Activated naive CD4-positive, alpha-beta T cell treated with anti-CD3 and anti-CD28 coated beads for 36 hours (primary cell): ENCODE measurements at regions of chr10 and their contacts with region 1.

Region 1: DNA sequence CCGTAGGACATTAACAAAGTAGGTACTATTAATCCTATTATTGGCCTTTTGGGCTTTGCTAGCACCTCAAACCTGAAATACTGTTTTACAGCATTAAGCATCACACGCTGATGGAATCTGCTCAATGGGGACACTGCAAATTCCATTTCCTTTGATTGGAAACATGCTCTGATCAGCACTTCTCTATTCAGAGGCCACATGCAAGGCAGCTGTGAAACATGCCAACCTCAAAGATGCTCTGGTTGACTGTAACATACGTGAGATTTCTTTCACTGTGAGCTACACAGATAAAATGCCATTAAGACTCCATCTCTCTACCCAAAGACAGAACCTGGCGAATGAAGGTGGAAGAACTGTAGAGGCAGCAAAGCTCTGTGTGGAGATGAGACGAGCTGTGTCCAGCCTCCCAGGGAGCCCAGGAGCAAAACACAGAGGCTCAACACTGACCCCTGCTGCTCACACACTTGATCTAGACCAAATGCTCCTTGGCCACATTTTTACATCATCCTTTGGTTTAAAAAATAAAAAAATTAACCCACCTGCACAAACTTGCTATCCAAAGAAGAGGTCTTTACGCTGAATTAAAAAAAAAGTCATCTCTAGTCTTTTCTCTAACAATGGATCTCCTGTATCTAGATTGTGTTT is 8.0 kb downstream of the RSU1 start:
- DNase-seq: peak; percentile 83
- H3K4me3 Mint-ChIP-seq: no peak overlapping the region
- H3K27ac Mint-ChIP-seq: no peak overlapping the region
- H3K4me1 Mint-ChIP-seq: peaks cover 10% of the 10 kb centered on the region
- H3K27me3 Mint-ChIP-seq: no peaks in the 10 kb centered on the region

Region 2: GRCh38 chr10:15879058-15879457 is 930.1 kb before region 1 on chr10:
- CTCF ChIA-PET with region 1: no interaction called
- intact Hi-C with region 1: loop called (anchors 1 kb)
- DNase-seq: no peak
- H3K4me3 Mint-ChIP-seq: no peak overlapping the region
- H3K27ac Mint-ChIP-seq: no peak overlapping the region
- H3K4me1 Mint-ChIP-seq: no peaks in the 10 kb centered on the region
- H3K27me3 Mint-ChIP-seq: peaks cover 42% of the 10 kb centered on the region

Region 3: GRCh38 chr10:15901889-15902288 is 907.3 kb before region 1 on chr10:
- CTCF ChIA-PET with region 1: interaction called, 3 read pairs
- intact Hi-C with region 1: loop called (anchors 1 kb)
- DNase-seq: no peak
- H3K4me3 Mint-ChIP-seq: no peak overlapping the region
- H3K27ac Mint-ChIP-seq: no peak overlapping the region
- H3K4me1 Mint-ChIP-seq: no peaks in the 10 kb centered on the region
- H3K27me3 Mint-ChIP-seq: peaks cover 2% of the 10 kb centered on the region

Region 4: GRCh38 chr10:16116404-16117304 is 692.5 kb before region 1 on chr10:
- CTCF ChIA-PET with region 1: no interaction called
- intact Hi-C with region 1: loop called (anchors 2 kb)
- DNase-seq: peak; percentile 8
- H3K4me3 Mint-ChIP-seq: no peak overlapping the region
- H3K27ac Mint-ChIP-seq: no peak overlapping the region
- H3K4me1 Mint-ChIP-seq: no peaks in the 10 kb centered on the region
- H3K27me3 Mint-ChIP-seq: no peaks in the 10 kb centered on the region

Region 5: GRCh38 chr10:16314259-16314658 is 494.9 kb before region 1 on chr10:
- CTCF ChIA-PET with region 1: no interaction called
- intact Hi-C with region 1: loop called (anchors 1 kb)
- DNase-seq: peak; percentile 9
- H3K4me3 Mint-ChIP-seq: no peak overlapping the region
- H3K27ac Mint-ChIP-seq: no peak overlapping the region
- H3K4me1 Mint-ChIP-seq: no peaks in the 10 kb centered on the region
- H3K27me3 Mint-ChIP-seq: peaks cover 2% of the 10 kb centered on the region

Region 6: GRCh38 chr10:16520900-16521299 is 288.3 kb before region 1 on chr10:
- CTCF ChIA-PET with region 1: no interaction called
- intact Hi-C with region 1: loop called (anchors 1 kb)
- DNase-seq: peak; percentile 56
- H3K4me3 Mint-ChIP-seq: peak overlapping the region; percentile 62
- H3K27ac Mint-ChIP-seq: no peak overlapping the region
- H3K4me1 Mint-ChIP-seq: peaks cover 6% of the 10 kb centered on the region
- H3K27me3 Mint-ChIP-seq: peaks cover 41% of the 10 kb centered on the region

Region 7: GRCh38 chr10:16732376-16732775 is 76.8 kb before region 1 on chr10:
- CTCF ChIA-PET with region 1: no interaction called
- intact Hi-C with region 1: no loop called
- DNase-seq: peak; percentile 7
- H3K4me3 Mint-ChIP-seq: no peak overlapping the region
- H3K27ac Mint-ChIP-seq: no peak overlapping the region
- H3K4me1 Mint-ChIP-seq: peaks cover 5% of the 10 kb centered on the region
- H3K27me3 Mint-ChIP-seq: no peaks in the 10 kb centered on the region